ENCODE measurements at regions of chr4 and their contacts with region 1.

Region 1: GRCh38 chr4:48016141-48017103 is at the starts of genes CNGA1 and NIPAL1:
- DNase-seq: peak; percentile 95 to 96
- H3K4me3 ChIP-seq: peak within 1 kb of the TSS; percentile 94
- H3K4me3 Mint-ChIP-seq: peak within 1 kb of the TSS; percentile 93
- H3K27ac Mint-ChIP-seq: peak within 1 kb of the TSS; percentile 89
- H3K4me1 ChIP-seq: peaks cover 21% of the 10 kb centered on the region
- H3K4me1 Mint-ChIP-seq: peaks cover 18% of the 10 kb centered on the region
- H3K27me3 ChIP-seq: no peaks in the 10 kb centered on the region
- H3K27me3 Mint-ChIP-seq: no peaks in the 10 kb centered on the region
- CTCF ChIP-seq: peak in 1 of 2 experiments; percentile 67
- total RNA-seq, gene CNGA1: 1.5 and 1.8 TPM in 2 replicates
- total RNA-seq, gene NIPAL1: 17.0 and 18.1 TPM in 2 replicates

Region 2: DNA sequence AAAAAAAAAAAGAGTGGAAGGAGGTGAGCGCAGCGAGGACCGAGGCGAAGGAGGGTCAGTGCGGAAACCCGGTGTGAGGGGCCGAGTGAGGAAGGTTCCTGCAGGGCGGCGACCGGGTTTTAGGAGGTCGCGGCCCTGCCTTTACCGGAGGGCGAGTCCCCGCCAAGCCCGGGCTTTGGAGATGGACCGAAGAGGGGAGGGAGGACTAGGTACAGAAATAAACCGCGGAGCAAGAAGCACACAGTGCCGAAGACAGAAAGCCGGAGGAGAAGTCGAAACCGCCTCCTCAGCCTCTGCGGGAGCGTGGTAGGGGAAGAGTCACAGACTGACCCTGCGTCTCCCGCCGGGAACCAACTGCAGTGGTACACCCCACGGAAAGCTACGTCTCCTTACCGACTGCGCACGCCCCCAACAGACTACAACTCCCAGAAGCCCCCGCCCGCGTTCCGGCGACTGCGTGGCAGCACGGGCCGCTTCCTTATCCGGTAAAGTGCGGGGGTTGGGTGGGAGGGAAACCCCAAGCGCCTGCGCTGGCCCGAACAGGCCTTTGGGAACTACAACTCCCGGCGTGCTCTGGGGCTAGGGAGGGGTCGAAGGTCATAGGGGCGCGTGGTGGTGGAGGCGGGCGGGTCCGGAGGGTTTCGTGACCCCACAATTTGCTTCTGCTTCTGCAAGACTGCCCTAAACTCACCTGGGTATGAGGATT is 102.0 kb before region 1 on chr4 and contains the start of gene NFXL1:
- CTCF ChIA-PET with region 1: no interaction called
- POLR2A ChIA-PET with region 1: no interaction called
- intact Hi-C with region 1: loop called (anchors 5 kb)
- DNase-seq: peak; percentile 96 to 97
- H3K4me3 ChIP-seq: peak within 1 kb of the TSS; percentile 87
- H3K4me3 Mint-ChIP-seq: peak within 1 kb of the TSS; percentile 87
- H3K27ac Mint-ChIP-seq: peak within 1 kb of the TSS; percentile 90
- H3K4me1 ChIP-seq: peaks cover 7% of the 10 kb centered on the region
- H3K4me1 Mint-ChIP-seq: peaks cover 6% of the 10 kb centered on the region
- H3K27me3 ChIP-seq: no peaks in the 10 kb centered on the region
- H3K27me3 Mint-ChIP-seq: no peaks in the 10 kb centered on the region
- CTCF ChIP-seq: no peak
- total RNA-seq, gene NFXL1: 22.5 and 22.8 TPM in 2 replicates

Region 3: GRCh38 chr4:47926639-47927258 is 89.7 kb before region 1 on chr4:
- CTCF ChIA-PET with region 1: no interaction called
- POLR2A ChIA-PET with region 1: no interaction called
- intact Hi-C with region 1: loop called (anchors 2 kb)
- DNase-seq: peak; percentile 81 to 85
- H3K4me3 ChIP-seq: peak overlapping the region; percentile 44
- H3K4me3 Mint-ChIP-seq: peak overlapping the region; percentile 90
- H3K27ac Mint-ChIP-seq: peak overlapping the region; percentile 83
- H3K4me1 ChIP-seq: peaks cover 10% of the 10 kb centered on the region
- H3K4me1 Mint-ChIP-seq: no peaks in the 10 kb centered on the region
- H3K27me3 ChIP-seq: no peaks in the 10 kb centered on the region
- H3K27me3 Mint-ChIP-seq: no peaks in the 10 kb centered on the region
- CTCF ChIP-seq: peak; percentile 72 to 80

Region 4: DNA sequence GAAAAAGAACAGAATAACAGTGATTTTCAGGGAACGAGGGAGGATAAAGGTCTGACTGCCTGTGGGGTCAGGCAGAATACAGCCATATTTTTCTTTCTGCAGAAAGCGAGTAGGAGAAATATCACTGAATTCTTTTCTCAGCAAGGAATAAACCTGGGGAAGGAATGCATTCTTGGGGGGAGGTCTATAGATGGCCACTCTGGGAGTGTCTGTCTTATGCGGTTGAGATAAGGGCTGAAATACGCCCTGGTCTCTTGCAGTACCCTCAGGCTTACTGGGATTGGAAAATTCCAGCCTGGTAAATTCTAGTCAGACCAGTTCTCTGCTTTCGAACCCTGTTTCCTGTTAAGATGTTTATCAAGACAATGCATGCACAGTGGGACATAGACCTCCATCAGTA is 26.3 kb before region 1 on chr4:
- CTCF ChIA-PET with region 1: no interaction called
- POLR2A ChIA-PET with region 1: no interaction called
- intact Hi-C with region 1: no loop called
- DNase-seq: peak in 1 of 2 experiments; percentile 33
- H3K4me3 ChIP-seq: no peak overlapping the region
- H3K4me3 Mint-ChIP-seq: no peak overlapping the region
- H3K27ac Mint-ChIP-seq: no peak overlapping the region
- H3K4me1 ChIP-seq: no peaks in the 10 kb centered on the region
- H3K4me1 Mint-ChIP-seq: no peaks in the 10 kb centered on the region
- H3K27me3 ChIP-seq: no peaks in the 10 kb centered on the region
- H3K27me3 Mint-ChIP-seq: no peaks in the 10 kb centered on the region
- CTCF ChIP-seq: no peak

Region 5: DNA sequence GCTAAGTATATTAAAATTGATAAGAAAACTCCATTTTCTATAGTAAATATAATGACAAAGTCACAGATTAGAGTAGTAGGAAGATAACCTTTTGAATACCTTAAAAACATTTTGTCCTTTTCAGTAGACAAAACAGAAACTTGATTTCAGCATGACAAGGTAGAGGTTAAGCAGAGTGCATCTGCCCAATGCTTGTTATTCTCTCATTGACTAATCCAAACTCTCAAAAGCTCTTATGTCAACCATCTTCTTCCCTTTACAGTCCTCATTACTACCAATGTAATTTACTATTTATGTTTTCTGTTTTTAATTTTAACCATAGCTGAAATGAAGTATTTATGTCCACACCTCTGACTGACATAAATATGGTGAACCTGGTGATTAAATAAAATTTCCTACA is 11.2 kb after region 1 on chr4:
- CTCF ChIA-PET with region 1: no interaction called
- POLR2A ChIA-PET with region 1: no interaction called
- intact Hi-C with region 1: no loop called
- DNase-seq: no peak
- H3K4me3 ChIP-seq: no peak overlapping the region
- H3K4me3 Mint-ChIP-seq: no peak overlapping the region
- H3K27ac Mint-ChIP-seq: no peak overlapping the region
- H3K4me1 ChIP-seq: peaks cover 16% of the 10 kb centered on the region
- H3K4me1 Mint-ChIP-seq: peaks cover 16% of the 10 kb centered on the region
- H3K27me3 ChIP-seq: no peaks in the 10 kb centered on the region
- H3K27me3 Mint-ChIP-seq: no peaks in the 10 kb centered on the region
- CTCF ChIP-seq: no peak

Region 6: GRCh38 chr4:48042979-48043461 is 26.6 kb after region 1 on chr4:
- CTCF ChIA-PET with region 1: no interaction called
- POLR2A ChIA-PET with region 1: no interaction called
- intact Hi-C with region 1: loop called (anchors 2 kb)
- DNase-seq: peak in 1 of 2 experiments; percentile 40
- H3K4me3 ChIP-seq: no peak overlapping the region
- H3K4me3 Mint-ChIP-seq: peak overlapping the region; percentile 50
- H3K27ac Mint-ChIP-seq: peak overlapping the region; percentile 93
- H3K4me1 ChIP-seq: peaks cover 37% of the 10 kb centered on the region
- H3K4me1 Mint-ChIP-seq: peaks cover 18% of the 10 kb centered on the region
- H3K27me3 ChIP-seq: no peaks in the 10 kb centered on the region
- H3K27me3 Mint-ChIP-seq: no peaks in the 10 kb centered on the region
- CTCF ChIP-seq: no peak

Region 7: DNA sequence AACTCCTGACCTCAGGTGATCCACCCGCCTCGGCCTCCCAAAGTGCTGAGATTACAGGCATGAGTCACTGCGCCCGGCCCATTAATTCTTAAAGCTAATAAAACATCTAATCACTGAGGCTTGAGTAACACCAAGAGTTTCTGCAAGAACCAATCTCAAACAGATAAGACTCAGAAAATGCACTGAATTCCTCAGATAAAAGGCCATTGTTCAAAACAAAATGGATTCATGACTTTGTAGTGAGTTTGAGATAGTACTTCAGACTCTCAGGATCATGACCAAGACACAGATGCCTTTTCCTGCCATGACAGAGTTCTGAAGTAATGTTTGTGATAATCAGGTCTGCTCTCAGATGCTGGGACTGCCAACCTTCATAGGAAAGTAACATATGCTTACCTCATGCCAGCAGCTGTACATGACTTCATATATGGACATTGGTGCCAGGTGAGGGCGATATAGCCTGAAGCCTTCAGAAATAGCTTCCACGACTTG is 54.7 kb after region 1 on chr4:
- CTCF ChIA-PET with region 1: no interaction called
- POLR2A ChIA-PET with region 1: no interaction called
- intact Hi-C with region 1: loop called (anchors 2 kb)
- DNase-seq: peak; percentile 78 to 87
- H3K4me3 ChIP-seq: no peak overlapping the region
- H3K4me3 Mint-ChIP-seq: peak overlapping the region; percentile 35
- H3K27ac Mint-ChIP-seq: peak overlapping the region; percentile 84
- H3K4me1 ChIP-seq: peaks cover 44% of the 10 kb centered on the region
- H3K4me1 Mint-ChIP-seq: peaks cover 21% of the 10 kb centered on the region
- H3K27me3 ChIP-seq: no peaks in the 10 kb centered on the region
- H3K27me3 Mint-ChIP-seq: no peaks in the 10 kb centered on the region
- CTCF ChIP-seq: peak in 1 of 2 experiments; percentile 10

Region 8: DNA sequence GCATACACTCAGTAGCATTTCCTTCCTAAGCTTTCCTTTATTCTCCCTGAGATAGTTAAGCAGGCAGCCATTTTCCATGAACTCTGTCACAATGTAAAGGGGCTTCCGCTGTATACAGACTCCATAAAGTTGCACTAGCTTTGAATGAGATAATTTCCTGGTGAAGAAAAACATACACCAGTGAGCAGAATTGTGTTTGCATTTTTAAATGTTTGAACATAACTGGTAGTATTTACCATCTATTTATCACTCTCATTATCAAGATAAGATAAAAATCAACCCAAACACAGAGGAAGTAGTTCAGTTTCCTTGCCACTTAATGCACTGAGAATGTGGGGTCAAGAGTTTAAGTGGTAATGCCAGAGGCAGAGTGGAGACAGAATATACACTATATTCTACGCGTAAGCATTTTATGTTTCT is 63.6 kb after region 1 on chr4:
- CTCF ChIA-PET with region 1: no interaction called
- POLR2A ChIA-PET with region 1: no interaction called
- intact Hi-C with region 1: loop called (anchors 2 kb)
- DNase-seq: peak in 1 of 2 experiments; percentile 35
- H3K4me3 ChIP-seq: no peak overlapping the region
- H3K4me3 Mint-ChIP-seq: peak overlapping the region; percentile 69
- H3K27ac Mint-ChIP-seq: peak overlapping the region; percentile 89
- H3K4me1 ChIP-seq: peaks cover 54% of the 10 kb centered on the region
- H3K4me1 Mint-ChIP-seq: peaks cover 42% of the 10 kb centered on the region
- H3K27me3 ChIP-seq: no peaks in the 10 kb centered on the region
- H3K27me3 Mint-ChIP-seq: no peaks in the 10 kb centered on the region
- CTCF ChIP-seq: no peak